CD8-positive, alpha-beta T cell (primary cell): ENCODE measurements at regions of chr14 and their contacts with region 1.

Region 1: GRCh38 chr14:45267071-45267470 is 14.1 kb upstream of the MIS18BP1 start:
- DNase-seq: no peak
- ATAC-seq: no peak
- H3K4me3 ChIP-seq: no peak overlapping the region
- H3K4me3 Mint-ChIP-seq: no peak overlapping the region
- H3K27ac ChIP-seq: no peak overlapping the region
- H3K27ac Mint-ChIP-seq: no peak overlapping the region
- H3K4me1 ChIP-seq: no peaks in the 10 kb centered on the region
- H3K4me1 Mint-ChIP-seq: no peaks in the 10 kb centered on the region
- H3K27me3 ChIP-seq: no peaks in the 10 kb centered on the region
- H3K27me3 Mint-ChIP-seq: no peaks in the 10 kb centered on the region
- CTCF ChIP-seq: no peak

Region 2: GRCh38 chr14:44846232-44846824 is 420.7 kb before region 1 on chr14:
- CTCF ChIA-PET with region 1: no interaction called
- POLR2A ChIA-PET with region 1: no interaction called
- intact Hi-C with region 1: loop called in 1 of 2 experiments (anchors 2 kb)
- DNase-seq: peak in 2 of 9 experiments; percentile 47 to 55
- ATAC-seq: peak; percentile 62
- H3K4me3 ChIP-seq: no peak overlapping the region
- H3K4me3 Mint-ChIP-seq: no peak overlapping the region
- H3K27ac ChIP-seq: no peak overlapping the region
- H3K27ac Mint-ChIP-seq: no peak overlapping the region
- H3K4me1 ChIP-seq: no peaks in the 10 kb centered on the region
- H3K4me1 Mint-ChIP-seq: peaks cover 5% of the 10 kb centered on the region
- H3K27me3 ChIP-seq: no peaks in the 10 kb centered on the region
- H3K27me3 Mint-ChIP-seq: peaks cover 16% of the 10 kb centered on the region
- CTCF ChIP-seq: peak; percentile 84

Region 3: GRCh38 chr14:44912041-44912869 is 354.8 kb before region 1 on chr14:
- CTCF ChIA-PET with region 1: interaction called, 11 read pairs
- POLR2A ChIA-PET with region 1: interaction called, 3 read pairs
- intact Hi-C with region 1: loop called (anchors 1 to 2 kb)
- DNase-seq: peak in 1 of 9 experiments; percentile 8
- ATAC-seq: no peak
- H3K4me3 ChIP-seq: peak overlapping the region in 1 of 2 experiments; percentile 27
- H3K4me3 Mint-ChIP-seq: peak overlapping the region; percentile 58
- H3K27ac ChIP-seq: no peak overlapping the region
- H3K27ac Mint-ChIP-seq: no peak overlapping the region
- H3K4me1 ChIP-seq: no peaks in the 10 kb centered on the region
- H3K4me1 Mint-ChIP-seq: peaks cover 10% of the 10 kb centered on the region
- H3K27me3 ChIP-seq: peaks cover 11 to 23% of the 10 kb centered on the region in 2 experiments
- H3K27me3 Mint-ChIP-seq: peaks cover 34% of the 10 kb centered on the region
- CTCF ChIP-seq: no peak

Region 4: GRCh38 chr14:45434221-45434620 is 167.2 kb after region 1 on chr14:
- CTCF ChIA-PET with region 1: no interaction called
- POLR2A ChIA-PET with region 1: no interaction called
- intact Hi-C with region 1: no loop called
- DNase-seq: no peak
- ATAC-seq: no peak
- H3K4me3 ChIP-seq: no peak overlapping the region
- H3K4me3 Mint-ChIP-seq: no peak overlapping the region
- H3K27ac ChIP-seq: no peak overlapping the region
- H3K27ac Mint-ChIP-seq: no peak overlapping the region
- H3K4me1 ChIP-seq: no peaks in the 10 kb centered on the region
- H3K4me1 Mint-ChIP-seq: no peaks in the 10 kb centered on the region
- H3K27me3 ChIP-seq: no peaks in the 10 kb centered on the region
- H3K27me3 Mint-ChIP-seq: no peaks in the 10 kb centered on the region
- CTCF ChIP-seq: no peak

Region 5: GRCh38 chr14:46008348-46008747 is 741.3 kb after region 1 on chr14:
- CTCF ChIA-PET with region 1: no interaction called
- POLR2A ChIA-PET with region 1: no interaction called
- intact Hi-C with region 1: no loop called
- DNase-seq: no peak
- ATAC-seq: no peak
- H3K4me3 ChIP-seq: no peak overlapping the region
- H3K4me3 Mint-ChIP-seq: no peak overlapping the region
- H3K27ac ChIP-seq: no peak overlapping the region
- H3K27ac Mint-ChIP-seq: no peak overlapping the region
- H3K4me1 ChIP-seq: no peaks in the 10 kb centered on the region
- H3K4me1 Mint-ChIP-seq: no peaks in the 10 kb centered on the region
- H3K27me3 ChIP-seq: no peaks in the 10 kb centered on the region
- H3K27me3 Mint-ChIP-seq: no peaks in the 10 kb centered on the region
- CTCF ChIP-seq: no peak